Common myeloid progenitor, CD34-positive (primary cell): ENCODE measurements at regions of chr6 and their contacts with region 1.

Region 1: DNA sequence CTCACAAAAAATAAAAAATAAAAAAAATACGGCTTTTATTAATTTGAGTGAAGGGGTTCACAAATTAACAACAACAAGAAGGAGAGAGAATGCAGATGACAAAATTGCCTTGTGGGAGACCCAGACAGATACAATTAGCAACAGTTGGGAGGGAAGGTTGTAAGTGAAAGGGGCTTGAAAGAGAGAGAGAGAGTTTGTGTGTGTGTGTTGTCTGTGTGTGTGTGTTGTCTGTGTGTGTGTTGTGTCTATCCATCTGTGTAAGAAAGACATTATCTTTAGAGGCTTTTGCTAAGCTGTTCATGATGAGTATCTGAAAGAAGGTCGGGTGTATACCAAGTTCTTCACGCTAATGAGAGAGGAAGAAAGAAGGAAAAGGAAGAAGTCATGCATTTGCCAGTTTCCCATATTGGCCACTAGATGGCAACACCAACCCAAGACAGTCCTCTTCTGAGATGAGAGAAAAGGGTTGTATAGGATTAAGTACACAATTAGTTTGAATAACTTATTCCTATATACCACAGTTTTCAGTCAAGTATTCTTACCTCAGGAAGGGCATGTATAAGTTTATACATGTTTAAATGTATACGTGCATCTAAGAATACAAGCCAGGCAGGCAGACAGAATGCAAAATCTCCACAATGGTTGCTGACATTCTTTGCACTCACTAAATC is 63.7 kb upstream of the CD2AP start:
- DNase-seq: peak; percentile 72 to 84 (median 84)
- H3K4me3 ChIP-seq: peak overlapping the region in 6 of 7 experiments; percentile 12 to 88 (median 72)
- H3K27ac ChIP-seq: no peak overlapping the region
- H3K4me1 ChIP-seq: peaks cover 0 to 13% (median 8%) of the 10 kb centered on the region in 4 experiments
- H3K27me3 ChIP-seq: no peaks in the 10 kb centered on the region

Region 2: GRCh38 chr6:47438481-47439347 is 24.8 kb after region 1 on chr6:
- CTCF ChIA-PET with region 1: no interaction called
- POLR2A ChIA-PET with region 1: no interaction called
- DNase-seq: peak in 2 of 3 donors; percentile 56 to 71
- H3K4me3 ChIP-seq: no peak overlapping the region
- H3K27ac ChIP-seq: no peak overlapping the region
- H3K4me1 ChIP-seq: peaks cover 4 to 17% (median 7%) of the 10 kb centered on the region in 4 experiments
- H3K27me3 ChIP-seq: no peaks in the 10 kb centered on the region

Region 3: GRCh38 chr6:47477497-47478232 is 63.8 kb after region 1 on chr6 and contains the start of gene CD2AP:
- CTCF ChIA-PET with region 1: interaction called, 18 read pairs
- POLR2A ChIA-PET with region 1: interaction called, 7 read pairs
- DNase-seq: peak; percentile 97 to 99 (median 99)
- H3K4me3 ChIP-seq: peak within 1 kb of the TSS; percentile 82 to 99 (median 95)
- H3K27ac ChIP-seq: peak within 1 kb of the TSS; percentile 94 to 96
- H3K4me1 ChIP-seq: peaks cover 11 to 36% (median 26%) of the 10 kb centered on the region in 4 experiments
- H3K27me3 ChIP-seq: no peaks in the 10 kb centered on the region

Region 4: DNA sequence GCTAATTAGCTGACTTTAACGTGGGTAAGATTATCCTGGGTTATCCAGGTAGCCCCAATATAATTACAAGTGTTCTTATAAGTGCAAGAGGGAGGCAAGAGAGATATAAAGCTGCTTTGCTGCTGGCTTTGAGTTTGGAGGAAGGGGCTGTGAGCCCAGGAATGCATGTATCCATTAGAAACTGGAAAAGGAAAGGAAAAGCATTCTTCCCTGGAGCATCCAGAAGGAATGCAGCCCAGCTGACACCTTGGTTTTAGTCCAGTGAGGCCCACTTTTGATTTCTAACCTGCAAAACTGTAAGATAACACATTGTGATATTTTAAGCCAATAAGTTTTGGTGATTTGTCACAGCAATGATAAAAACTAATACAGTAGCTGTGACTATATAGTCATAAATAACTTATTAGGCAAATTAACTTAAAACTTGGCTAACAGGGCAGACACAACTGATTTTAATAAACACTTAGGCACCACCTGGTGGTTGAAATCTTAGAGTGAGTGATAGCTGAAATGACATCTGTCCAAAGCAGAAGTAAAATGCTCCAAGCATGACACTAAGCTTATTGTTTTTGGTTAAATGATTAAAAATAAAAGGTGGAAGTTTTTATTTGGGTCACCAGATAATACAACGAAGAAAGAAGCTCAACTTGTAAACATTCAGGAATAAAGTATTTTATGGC is 320.1 kb after region 1 on chr6:
- CTCF ChIA-PET with region 1: interaction called, 20 read pairs
- POLR2A ChIA-PET with region 1: no interaction called
- DNase-seq: peak; percentile 42 to 69 (median 66)
- H3K4me3 ChIP-seq: no peak overlapping the region
- H3K27ac ChIP-seq: no peak overlapping the region
- H3K4me1 ChIP-seq: no peaks in the 10 kb centered on the region
- H3K27me3 ChIP-seq: peaks cover 0 to 17% (median 10%) of the 10 kb centered on the region in 5 experiments